ENCODE measurements at regions of chr11 and their contacts with region 1.

Region 1: GRCh38 chr11:6705905-6706535 is 22.9 kb upstream of the MRPL17 start:
- DNase-seq: peak; percentile 60
- H3K4me3 Mint-ChIP-seq: no peak overlapping the region
- H3K27ac Mint-ChIP-seq: peak overlapping the region; percentile 28
- H3K4me1 Mint-ChIP-seq: peaks cover 5% of the 10 kb centered on the region
- H3K27me3 Mint-ChIP-seq: no peaks in the 10 kb centered on the region

Region 2: GRCh38 chr11:6635082-6635932 is 70.7 kb before region 1 on chr11:
- CTCF ChIA-PET with region 1: no interaction called
- DNase-seq: no peak
- H3K4me3 Mint-ChIP-seq: no peak overlapping the region
- H3K27ac Mint-ChIP-seq: no peak overlapping the region
- H3K4me1 Mint-ChIP-seq: peaks cover 4% of the 10 kb centered on the region
- H3K27me3 Mint-ChIP-seq: no peaks in the 10 kb centered on the region

Region 3: DNA sequence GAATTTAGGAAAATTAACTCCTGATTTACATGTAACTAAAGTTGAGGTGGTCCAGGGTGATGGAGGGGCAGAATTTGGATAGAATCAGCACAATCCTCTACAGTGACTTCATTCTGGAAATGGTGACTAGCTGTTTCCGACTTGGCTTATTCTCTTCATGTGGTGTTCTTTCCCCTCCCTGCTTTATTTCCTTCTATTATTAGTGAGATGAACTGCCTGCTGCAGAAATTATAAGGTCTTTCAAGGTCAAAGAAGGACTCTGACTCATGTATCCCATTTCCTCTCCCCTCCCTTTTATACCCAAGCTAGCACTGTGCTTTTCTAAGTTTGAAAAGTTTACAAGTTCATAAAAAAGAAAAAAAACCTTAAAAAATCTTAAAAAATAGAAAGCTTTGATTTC is 10.6 kb before region 1 on chr11:
- CTCF ChIA-PET with region 1: interaction called, 18 read pairs
- DNase-seq: no peak
- H3K4me3 Mint-ChIP-seq: no peak overlapping the region
- H3K27ac Mint-ChIP-seq: no peak overlapping the region
- H3K4me1 Mint-ChIP-seq: peaks cover 30% of the 10 kb centered on the region
- H3K27me3 Mint-ChIP-seq: no peaks in the 10 kb centered on the region

Region 4: GRCh38 chr11:6721343-6721742 is 15.3 kb after region 1 on chr11:
- CTCF ChIA-PET with region 1: interaction called, 13 read pairs
- DNase-seq: no peak
- H3K4me3 Mint-ChIP-seq: no peak overlapping the region
- H3K27ac Mint-ChIP-seq: peak overlapping the region; percentile 51
- H3K4me1 Mint-ChIP-seq: peaks cover 59% of the 10 kb centered on the region
- H3K27me3 Mint-ChIP-seq: no peaks in the 10 kb centered on the region

Region 5: GRCh38 chr11:6757373-6757967 is 51.5 kb after region 1 on chr11:
- CTCF ChIA-PET with region 1: interaction called, 68 read pairs
- DNase-seq: peak; percentile 78
- H3K4me3 Mint-ChIP-seq: no peak overlapping the region
- H3K27ac Mint-ChIP-seq: no peak overlapping the region
- H3K4me1 Mint-ChIP-seq: peaks cover 2% of the 10 kb centered on the region
- H3K27me3 Mint-ChIP-seq: no peaks in the 10 kb centered on the region

Region 6: GRCh38 chr11:6778518-6778917 is 72.5 kb after region 1 on chr11:
- CTCF ChIA-PET with region 1: no interaction called
- DNase-seq: no peak
- H3K4me3 Mint-ChIP-seq: no peak overlapping the region
- H3K27ac Mint-ChIP-seq: no peak overlapping the region
- H3K4me1 Mint-ChIP-seq: no peaks in the 10 kb centered on the region
- H3K27me3 Mint-ChIP-seq: peaks cover 8% of the 10 kb centered on the region

Region 7: DNA sequence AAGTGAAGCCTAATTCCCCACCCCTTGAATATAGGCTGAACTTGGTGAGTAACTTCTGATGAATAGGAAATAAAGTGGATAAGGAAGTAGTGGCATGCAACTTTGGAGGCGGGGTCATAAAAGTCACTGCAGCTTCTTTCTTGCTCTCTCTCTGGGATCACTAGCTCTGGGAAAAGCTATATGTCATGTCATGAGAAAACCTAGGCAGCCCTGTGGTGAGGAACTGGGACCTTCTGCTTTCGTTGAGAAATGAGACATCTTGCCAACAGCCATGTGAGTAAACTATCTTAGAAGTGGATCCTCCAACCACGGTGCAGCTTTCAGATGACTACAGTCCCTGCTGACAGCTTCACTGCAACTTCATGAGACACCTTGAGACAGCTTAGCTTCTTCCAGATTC is 298.5 kb after region 1 on chr11:
- CTCF ChIA-PET with region 1: no interaction called
- DNase-seq: no peak
- H3K4me3 Mint-ChIP-seq: no peak overlapping the region
- H3K27ac Mint-ChIP-seq: no peak overlapping the region
- H3K4me1 Mint-ChIP-seq: no peaks in the 10 kb centered on the region
- H3K27me3 Mint-ChIP-seq: no peaks in the 10 kb centered on the region